ENCODE measurements at regions of chr4 and their contacts with region 1.

Region 1: DNA sequence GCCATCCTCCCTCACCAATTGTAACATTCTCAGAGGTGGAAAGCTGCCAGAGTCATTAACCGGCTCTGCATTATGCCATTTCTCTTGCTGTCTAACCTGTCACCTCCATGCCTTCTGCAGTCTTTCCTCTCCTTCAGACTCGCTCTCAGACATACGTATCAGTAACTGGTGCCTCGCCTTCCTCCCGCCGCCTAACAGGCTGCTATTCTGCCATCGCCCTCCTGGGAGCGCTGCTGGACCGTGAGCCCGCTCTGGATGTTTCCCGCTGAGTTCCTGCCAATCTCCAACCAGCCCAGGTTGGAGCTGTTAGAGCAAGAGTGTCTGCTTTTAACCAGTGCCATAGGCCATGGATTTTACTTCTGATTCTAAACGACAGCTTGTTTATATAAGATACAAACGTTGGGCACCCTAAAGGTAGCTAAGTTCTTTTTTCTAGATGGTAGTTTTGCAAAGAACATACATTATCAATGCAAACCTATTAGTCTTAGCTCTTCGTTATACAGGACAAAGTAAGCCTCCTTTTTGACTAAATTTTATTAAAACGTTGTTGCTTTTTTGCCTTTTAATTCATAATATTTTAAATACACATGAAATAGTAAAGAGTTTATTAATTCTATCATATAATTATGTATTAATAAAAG is 59.5 kb upstream of the NEIL3 start:
- DNase-seq: peak; percentile 52 to 77 (median 71)
- H3K4me3 ChIP-seq: peak overlapping the region in 1 of 7 experiments; percentile 58
- H3K27ac ChIP-seq: no peak overlapping the region
- H3K4me1 ChIP-seq: peaks cover 0 to 3% (median 0%) of the 10 kb centered on the region in 4 experiments
- H3K27me3 ChIP-seq: peaks cover 0 to 2% (median 0%) of the 10 kb centered on the region in 5 experiments

Region 2: DNA sequence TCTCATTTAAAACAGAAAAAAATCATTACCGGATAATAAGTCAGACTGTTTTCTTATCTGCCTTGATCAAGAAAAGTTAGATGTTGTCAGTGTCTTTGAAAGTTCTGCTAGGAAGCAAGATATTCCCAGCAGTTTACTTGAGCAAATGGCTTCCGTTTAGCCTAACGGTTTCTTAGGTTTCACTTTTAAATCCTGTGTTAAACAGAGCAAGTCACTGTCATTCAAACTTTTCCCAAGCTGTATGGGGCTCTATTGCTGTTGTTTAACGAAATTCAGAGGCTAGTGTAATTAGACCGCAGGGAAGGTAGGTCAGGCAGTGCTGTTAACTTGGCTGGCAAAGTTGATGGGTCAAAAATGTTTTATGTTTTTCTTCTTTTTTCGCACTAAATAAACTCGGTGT is 20.8 kb before region 1 on chr4:
- CTCF ChIA-PET with region 1: no interaction called
- POLR2A ChIA-PET with region 1: no interaction called
- DNase-seq: peak; percentile 6 to 17 (median 16)
- H3K4me3 ChIP-seq: peak overlapping the region in 4 of 7 experiments; percentile 8 to 70 (median 34)
- H3K27ac ChIP-seq: peak overlapping the region; percentile 37 to 43
- H3K4me1 ChIP-seq: peaks cover 0 to 2% (median 0%) of the 10 kb centered on the region in 4 experiments
- H3K27me3 ChIP-seq: no peaks in the 10 kb centered on the region

Region 3: DNA sequence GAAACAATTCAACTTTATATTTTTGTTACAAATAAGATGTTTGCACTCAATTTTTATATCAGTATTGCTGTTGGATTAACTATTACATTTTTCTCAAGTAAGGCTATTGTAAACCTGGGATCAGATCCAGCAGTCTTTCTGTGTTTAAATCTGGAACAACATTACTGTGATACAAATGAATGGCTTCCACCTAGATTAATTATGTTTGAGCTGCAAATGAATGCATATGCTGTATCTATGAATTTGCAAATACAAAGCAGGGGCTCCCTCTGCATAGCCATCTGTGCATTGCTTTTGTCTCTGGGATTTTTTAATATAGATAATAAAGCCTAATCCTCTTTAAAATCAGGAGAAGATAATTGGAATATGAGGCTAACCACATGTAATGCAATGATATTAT is 10.3 kb before region 1 on chr4:
- CTCF ChIA-PET with region 1: interaction called, 24 read pairs
- POLR2A ChIA-PET with region 1: interaction called, 3 read pairs
- DNase-seq: no peak
- H3K4me3 ChIP-seq: no peak overlapping the region
- H3K27ac ChIP-seq: no peak overlapping the region
- H3K4me1 ChIP-seq: no peaks in the 10 kb centered on the region
- H3K27me3 ChIP-seq: no peaks in the 10 kb centered on the region

Region 4: GRCh38 chr4:177315767-177316464 is 65.7 kb after region 1 on chr4:
- CTCF ChIA-PET with region 1: no interaction called
- POLR2A ChIA-PET with region 1: no interaction called
- DNase-seq: peak; percentile 13 to 41 (median 32)
- H3K4me3 ChIP-seq: peak overlapping the region in 5 of 7 experiments; percentile 27 to 74 (median 48)
- H3K27ac ChIP-seq: peak overlapping the region; percentile 34 to 37
- H3K4me1 ChIP-seq: peaks cover 0 to 17% (median 5%) of the 10 kb centered on the region in 4 experiments
- H3K27me3 ChIP-seq: no peaks in the 10 kb centered on the region

Region 5: GRCh38 chr4:177339477-177340374 is 89.5 kb after region 1 on chr4:
- CTCF ChIA-PET with region 1: interaction called, 47 read pairs
- POLR2A ChIA-PET with region 1: no interaction called
- DNase-seq: peak; percentile 43 to 70 (median 67)
- H3K4me3 ChIP-seq: no peak overlapping the region
- H3K27ac ChIP-seq: no peak overlapping the region
- H3K4me1 ChIP-seq: no peaks in the 10 kb centered on the region
- H3K27me3 ChIP-seq: no peaks in the 10 kb centered on the region